ENCODE measurements at regions of chr7 and their contacts with region 1.

Region 1: GRCh38 chr7:151439855-151440798 is at the start of gene CRYGN:
- DNase-seq: peak in 1 of 2 donors; percentile 68
- H3K4me3 ChIP-seq: peak within 1 kb of the TSS in 1 of 2 donors; percentile 13
- H3K27ac ChIP-seq: peak within 1 kb of the TSS; percentile 83 to 88
- H3K4me1 ChIP-seq: peaks cover 0 to 68% (median 56%) of the 10 kb centered on the region in 4 donors
- H3K27me3 ChIP-seq: no peaks in the 10 kb centered on the region
- CTCF ChIP-seq: no peak

Region 2: GRCh38 chr7:151426486-151426905 is 13.6 kb before region 1 on chr7:
- intact Hi-C with region 1: loop called (anchors 2 kb)
- DNase-seq: peak; percentile 85 to 94
- H3K4me3 ChIP-seq: peak overlapping the region; percentile 23 to 36
- H3K27ac ChIP-seq: peak overlapping the region; percentile 82 to 86
- H3K4me1 ChIP-seq: peaks cover 0 to 54% (median 48%) of the 10 kb centered on the region in 4 donors
- H3K27me3 ChIP-seq: no peaks in the 10 kb centered on the region
- CTCF ChIP-seq: no peak

Region 3: GRCh38 chr7:151599401-151600227 is 159.5 kb after region 1 on chr7:
- intact Hi-C with region 1: no loop called
- DNase-seq: peak in 1 of 2 donors; percentile 29
- H3K4me3 ChIP-seq: no peak overlapping the region
- H3K27ac ChIP-seq: peak overlapping the region; percentile 41 to 67
- H3K4me1 ChIP-seq: peaks cover 0 to 38% (median 24%) of the 10 kb centered on the region in 4 donors
- H3K27me3 ChIP-seq: no peaks in the 10 kb centered on the region
- CTCF ChIP-seq: no peak